Aorta (tissue), 5 donors: ENCODE measurements at regions of chr3 and their contacts with region 1.

Region 1: DNA sequence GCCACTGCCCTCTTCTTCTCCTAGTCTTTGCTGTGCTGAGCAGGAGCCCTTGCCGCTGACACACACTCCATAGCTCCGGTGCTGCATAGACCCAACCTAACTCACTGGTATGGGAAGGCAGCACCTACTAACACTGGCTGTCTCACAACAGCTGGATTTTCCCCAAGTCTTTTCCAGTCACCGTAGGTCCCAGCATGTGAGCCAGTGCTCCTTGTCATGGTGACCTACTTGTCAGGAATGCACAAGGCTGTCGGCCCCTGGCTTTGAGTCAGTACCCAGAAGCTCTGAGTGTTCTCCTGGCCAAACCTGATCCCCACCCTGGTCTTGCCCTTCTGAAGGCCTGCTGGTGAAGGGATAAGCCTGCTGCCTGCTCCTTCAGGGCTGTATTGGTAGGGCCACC is 25.7 kb downstream of the AMOTL2 start:
- DNase-seq: peak; percentile 89
- ATAC-seq: peak; percentile 73
- H3K4me3 ChIP-seq: no peak overlapping the region
- H3K27ac ChIP-seq: peak overlapping the region in 1 of 2 donors; percentile 69
- H3K4me1 ChIP-seq: no peaks in the 10 kb centered on the region
- H3K27me3 ChIP-seq: no peaks in the 10 kb centered on the region

Region 2: DNA sequence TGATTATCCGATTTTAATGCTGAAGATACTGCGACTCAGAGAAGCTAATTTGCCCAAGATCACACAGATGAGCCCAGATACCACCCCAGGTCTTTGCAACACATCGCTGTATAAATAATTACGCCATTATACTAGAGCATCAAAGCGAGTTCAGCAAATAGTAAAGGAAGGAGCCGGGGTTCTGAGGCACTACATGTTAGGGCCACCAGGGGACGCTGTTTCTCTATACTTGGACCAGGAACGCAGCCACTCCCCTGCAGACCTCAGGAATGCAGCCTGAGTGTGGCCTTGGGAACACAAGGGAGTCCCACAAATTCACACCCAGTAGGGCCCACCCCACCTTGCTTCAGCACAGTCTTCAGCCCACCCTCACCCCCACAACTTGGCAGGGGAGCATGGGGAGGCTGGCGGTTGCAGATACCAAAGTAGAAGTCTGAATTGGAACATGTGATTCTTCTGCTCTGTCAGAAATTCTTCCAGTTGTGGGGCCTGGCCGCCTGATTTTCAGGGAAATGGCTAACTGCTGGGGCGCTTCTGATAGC is 40.1 kb before region 1 on chr3:
- intact Hi-C with region 1: loop called in 1 of 2 experiments (anchors 5 kb)
- DNase-seq: peak; percentile 87 to 91
- ATAC-seq: peak; percentile 91
- H3K4me3 ChIP-seq: no peak overlapping the region
- H3K27ac ChIP-seq: peak overlapping the region; percentile 30 to 58
- H3K4me1 ChIP-seq: no peaks in the 10 kb centered on the region
- H3K27me3 ChIP-seq: no peaks in the 10 kb centered on the region